Heart left ventricle (tissue), 16 donors: ENCODE measurements at regions of chr11 and their contacts with region 1.

Region 1: DNA sequence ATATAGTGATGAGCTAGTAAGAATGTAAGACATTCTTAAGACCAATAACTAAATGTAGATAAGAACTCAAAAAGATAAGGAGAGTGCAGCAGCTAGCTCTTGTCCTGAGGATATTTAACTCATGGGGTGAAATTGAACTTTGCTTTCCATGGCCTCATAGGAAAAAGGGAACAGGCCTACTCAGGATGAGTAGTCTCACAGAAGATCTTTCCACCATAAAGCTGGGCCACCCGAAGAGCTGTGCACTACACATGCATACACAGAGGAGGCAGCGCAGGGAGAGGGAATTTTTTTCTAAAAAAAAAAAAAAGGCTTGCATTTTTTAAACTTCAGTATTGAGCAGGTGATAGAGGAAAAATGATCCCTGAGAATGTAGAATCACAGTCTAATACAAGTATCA is 59.9 kb upstream of the CFAP300 start:
- DNase-seq: no peak
- ATAC-seq: no peak
- H3K4me3 ChIP-seq: no peak overlapping the region
- H3K27ac ChIP-seq: no peak overlapping the region
- H3K4me1 ChIP-seq: no peaks in the 10 kb centered on the region
- H3K27me3 ChIP-seq: no peaks in the 10 kb centered on the region
- CTCF ChIP-seq: no peak
- POLR2A ChIP-seq: no peak

Region 2: DNA sequence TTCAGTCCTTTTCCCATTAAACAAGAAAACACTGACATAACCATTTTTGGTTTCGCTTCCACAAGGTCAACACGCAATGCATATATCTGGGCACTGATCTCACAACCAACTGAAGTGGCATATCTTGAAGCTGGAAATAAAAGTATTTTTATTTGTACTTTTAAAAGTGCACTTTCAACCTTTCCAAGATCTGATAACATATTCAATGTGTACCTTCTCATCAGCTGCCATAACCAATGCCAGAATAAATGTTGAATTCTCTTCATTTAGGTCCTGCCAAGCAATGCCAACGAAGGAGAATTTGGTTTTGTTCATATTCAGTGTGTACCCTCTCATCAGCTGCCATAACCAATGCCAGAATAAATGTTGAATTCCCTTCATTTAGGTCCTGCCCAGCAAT is 221.4 kb before region 1 on chr11:
- intact Hi-C with region 1: no loop called
- DNase-seq: no peak
- ATAC-seq: no peak
- H3K4me3 ChIP-seq: no peak overlapping the region
- H3K27ac ChIP-seq: no peak overlapping the region
- H3K4me1 ChIP-seq: no peaks in the 10 kb centered on the region
- H3K27me3 ChIP-seq: no peaks in the 10 kb centered on the region
- CTCF ChIP-seq: no peak
- POLR2A ChIP-seq: no peak

Region 3: GRCh38 chr11:101807531-101807930 is 179.8 kb before region 1 on chr11:
- intact Hi-C with region 1: no loop called
- DNase-seq: no peak
- ATAC-seq: no peak
- H3K4me3 ChIP-seq: no peak overlapping the region
- H3K27ac ChIP-seq: no peak overlapping the region
- H3K4me1 ChIP-seq: no peaks in the 10 kb centered on the region
- H3K27me3 ChIP-seq: no peaks in the 10 kb centered on the region
- CTCF ChIP-seq: no peak
- POLR2A ChIP-seq: no peak

Region 4: GRCh38 chr11:101929294-101929916 is 58.0 kb before region 1 on chr11:
- intact Hi-C with region 1: loop called in 1 of 10 experiments (anchors 10 kb)
- DNase-seq: no peak
- ATAC-seq: no peak
- H3K4me3 ChIP-seq: no peak overlapping the region
- H3K27ac ChIP-seq: no peak overlapping the region
- H3K4me1 ChIP-seq: no peaks in the 10 kb centered on the region
- H3K27me3 ChIP-seq: no peaks in the 10 kb centered on the region
- CTCF ChIP-seq: no peak
- POLR2A ChIP-seq: no peak

Region 5: DNA sequence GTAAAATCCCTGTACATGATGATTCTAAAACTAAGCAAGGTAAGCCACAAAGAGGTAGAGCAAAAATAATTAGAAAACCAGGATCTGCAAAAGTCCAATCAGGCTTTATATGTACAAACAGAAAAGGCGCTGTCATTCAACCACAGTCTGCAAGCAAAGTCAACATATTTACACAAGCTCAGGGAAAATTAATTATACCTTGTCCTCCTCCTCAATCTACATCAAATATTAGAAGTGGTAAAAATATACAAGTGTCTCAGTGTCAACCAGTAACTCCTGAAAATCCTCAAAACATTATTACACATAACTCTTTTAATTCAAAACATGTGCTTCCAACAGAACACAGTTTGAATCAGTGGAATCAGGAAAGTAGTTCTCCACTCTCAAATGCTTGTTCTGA is 24.1 kb before region 1 on chr11:
- intact Hi-C with region 1: no loop called
- DNase-seq: no peak
- ATAC-seq: no peak
- H3K4me3 ChIP-seq: no peak overlapping the region
- H3K27ac ChIP-seq: no peak overlapping the region
- H3K4me1 ChIP-seq: no peaks in the 10 kb centered on the region
- H3K27me3 ChIP-seq: no peaks in the 10 kb centered on the region
- CTCF ChIP-seq: no peak
- POLR2A ChIP-seq: no peak